HEK293 (cell line): ENCODE measurements at regions of chr9 and their contacts with region 1.

Region 1: GRCh38 chr9:121609845-121610570 is 41.4 kb upstream of the DAB2IP start:
- H3K4me3 ChIP-seq: no peak overlapping the region
- H3K27ac ChIP-seq: no peak overlapping the region
- H3K4me1 ChIP-seq: peaks cover 4% of the 10 kb centered on the region; the same call in 1 of the 2 replicates
- CTCF ChIP-seq: no peak

Region 2: GRCh38 chr9:121498150-121498486 is 111.9 kb before region 1 on chr9:
- CTCF ChIA-PET with region 1: no interaction called
- POLR2A ChIA-PET with region 1: no interaction called
- H3K4me3 ChIP-seq: no peak overlapping the region
- H3K27ac ChIP-seq: no peak overlapping the region
- H3K4me1 ChIP-seq: peaks cover 7% of the 10 kb centered on the region
- CTCF ChIP-seq: no peak

Region 3: DNA sequence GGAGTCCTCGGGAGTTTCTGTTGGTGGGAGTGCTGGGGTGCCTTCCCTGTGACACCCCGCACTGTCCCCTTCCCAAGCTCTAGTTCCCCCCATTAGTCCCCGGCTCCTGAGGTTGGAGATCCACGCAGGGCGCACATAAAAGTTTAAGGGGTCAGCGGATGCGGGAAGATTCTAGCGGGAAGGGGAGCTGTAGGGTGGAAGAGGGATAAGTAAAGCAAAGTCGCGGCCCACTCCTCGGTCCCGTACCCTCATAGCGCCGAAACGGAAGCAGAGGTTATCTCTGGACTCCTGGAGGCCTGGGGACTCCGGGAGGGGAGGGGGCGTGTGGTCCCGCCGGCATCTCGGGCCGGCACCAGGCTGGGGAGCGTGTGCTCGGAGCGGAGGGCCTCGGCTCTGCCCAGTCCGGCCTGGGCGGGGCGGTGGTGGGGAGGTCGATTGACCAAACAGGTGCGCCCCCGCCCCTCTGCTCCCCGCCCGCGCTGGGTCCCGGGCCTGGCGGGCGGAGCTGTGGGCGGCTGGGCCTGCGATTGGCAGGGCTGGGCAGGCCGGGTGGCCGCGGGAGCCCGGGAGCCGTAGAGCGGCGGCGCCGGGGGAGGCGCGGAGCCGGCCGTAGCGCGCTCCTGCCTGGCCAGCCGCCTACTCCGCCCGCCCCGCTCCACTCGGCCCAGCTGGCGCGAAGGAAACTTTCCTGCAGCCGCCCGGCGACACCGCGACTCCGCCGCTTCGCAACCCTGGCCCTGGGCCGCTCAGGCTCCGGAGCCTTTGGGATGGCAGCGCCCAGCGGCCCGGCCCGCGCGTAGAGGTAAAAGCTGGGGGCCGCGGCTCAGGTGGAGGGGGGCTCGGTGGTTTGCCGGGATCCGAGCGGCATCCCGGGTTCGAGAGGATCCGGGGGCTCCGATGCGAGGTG is 10.8 kb before region 1 on chr9:
- CTCF ChIA-PET with region 1: interaction called, 7 read pairs
- POLR2A ChIA-PET with region 1: interaction called, 25 read pairs
- H3K4me3 ChIP-seq: peak overlapping the region; percentile 74
- H3K27ac ChIP-seq: peak overlapping the region; percentile 60; the same call in 1 of the 2 replicates
- H3K4me1 ChIP-seq: no peaks in the 10 kb centered on the region
- CTCF ChIP-seq: no peak; the same call in 1 of the 2 replicates